Activated CD4-positive, alpha-beta T cell treated with anti-CD3 and anti-CD28 coated beads for 36 hours (primary cell): ENCODE measurements at regions of chr15 and their contacts with region 1.

Region 1: DNA sequence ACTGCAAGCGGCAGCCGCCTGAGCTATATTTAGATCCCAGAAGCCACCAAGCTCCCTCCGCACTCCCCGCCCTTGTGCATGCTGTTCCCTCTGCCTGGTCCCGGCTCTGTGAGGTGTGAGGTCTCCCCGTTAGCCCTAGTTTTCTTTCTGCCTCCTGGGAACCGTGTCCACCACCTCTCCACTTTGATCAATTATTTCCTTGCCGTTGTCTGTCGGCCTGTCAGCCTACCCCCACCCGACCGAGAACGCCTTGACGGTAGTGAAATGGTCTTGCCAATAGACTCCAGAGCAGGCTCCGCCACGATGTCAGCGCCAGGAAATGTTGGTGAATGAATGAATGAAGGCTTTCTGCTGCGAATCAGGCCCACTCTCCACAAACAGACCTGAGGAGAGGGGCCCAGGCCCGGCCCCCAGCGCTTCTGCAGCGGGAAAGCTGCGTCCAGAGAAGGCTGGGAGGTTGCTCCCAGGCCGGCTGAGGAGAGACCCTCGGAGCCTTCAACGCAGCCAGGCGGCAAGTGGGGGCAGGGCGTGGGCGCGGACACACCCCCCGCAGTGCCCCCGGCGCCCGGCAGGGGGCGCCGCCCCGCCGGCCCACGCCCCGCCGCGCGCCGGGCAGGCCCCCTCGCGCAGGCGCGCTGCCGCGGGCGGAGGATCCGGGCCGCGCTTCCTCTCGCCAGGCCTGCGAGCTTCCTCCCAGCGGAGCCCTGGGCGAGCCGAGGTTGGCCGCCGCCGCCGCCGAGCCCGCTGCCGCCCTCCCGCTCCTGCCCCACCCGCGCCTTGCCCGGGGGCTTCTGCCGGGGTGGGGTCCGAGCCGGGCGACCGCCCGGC is at the start of gene CSK:
- DNase-seq: peak; percentile 84
- ATAC-seq: peak; percentile 27
- H3K4me3 Mint-ChIP-seq: peak within 1 kb of the TSS; percentile 89
- H3K27ac Mint-ChIP-seq: peak within 1 kb of the TSS; percentile 100
- H3K4me1 Mint-ChIP-seq: peaks cover 56% of the 10 kb centered on the region
- H3K27me3 Mint-ChIP-seq: no peaks in the 10 kb centered on the region
- total RNA-seq, gene CSK: 229 to 272 TPM

Region 2: DNA sequence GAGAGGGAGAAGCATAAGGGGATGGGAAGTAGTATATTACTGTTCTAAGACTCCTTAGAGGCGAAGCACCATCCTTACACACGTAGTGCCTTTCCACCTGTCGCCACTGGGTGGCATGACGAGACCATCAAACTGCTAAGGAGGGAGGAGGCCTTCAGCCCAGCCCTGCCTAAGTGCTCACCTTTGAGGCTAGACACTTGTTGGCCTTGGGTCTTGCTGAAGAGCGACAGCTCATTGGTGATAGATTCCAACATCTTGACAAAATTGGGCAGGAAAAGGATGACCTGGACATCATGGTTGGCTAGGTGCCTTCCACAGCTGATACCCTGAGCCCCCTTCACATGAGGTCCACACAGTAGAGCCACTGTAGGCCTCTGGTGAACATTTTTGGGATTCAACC is 146.4 kb before region 1 on chr15:
- CTCF ChIA-PET with region 1: interaction called, 458 read pairs
- POLR2A ChIA-PET with region 1: no interaction called
- intact Hi-C with region 1: no loop called
- DNase-seq: peak; percentile 87
- ATAC-seq: peak; percentile 90
- H3K4me3 Mint-ChIP-seq: no peak overlapping the region
- H3K27ac Mint-ChIP-seq: no peak overlapping the region
- H3K4me1 Mint-ChIP-seq: no peaks in the 10 kb centered on the region
- H3K27me3 Mint-ChIP-seq: no peaks in the 10 kb centered on the region

Region 3: GRCh38 chr15:74793135-74794028 is 11.7 kb after region 1 on chr15:
- CTCF ChIA-PET with region 1: interaction called, 743 read pairs
- POLR2A ChIA-PET with region 1: interaction called, 26 read pairs
- intact Hi-C with region 1: loop called in 1 of 2 experiments (anchors 1 kb)
- DNase-seq: peak; percentile 86
- ATAC-seq: peak; percentile 24
- H3K4me3 Mint-ChIP-seq: no peak overlapping the region
- H3K27ac Mint-ChIP-seq: peak overlapping the region; percentile 88
- H3K4me1 Mint-ChIP-seq: peaks cover 86% of the 10 kb centered on the region
- H3K27me3 Mint-ChIP-seq: no peaks in the 10 kb centered on the region

Region 4: DNA sequence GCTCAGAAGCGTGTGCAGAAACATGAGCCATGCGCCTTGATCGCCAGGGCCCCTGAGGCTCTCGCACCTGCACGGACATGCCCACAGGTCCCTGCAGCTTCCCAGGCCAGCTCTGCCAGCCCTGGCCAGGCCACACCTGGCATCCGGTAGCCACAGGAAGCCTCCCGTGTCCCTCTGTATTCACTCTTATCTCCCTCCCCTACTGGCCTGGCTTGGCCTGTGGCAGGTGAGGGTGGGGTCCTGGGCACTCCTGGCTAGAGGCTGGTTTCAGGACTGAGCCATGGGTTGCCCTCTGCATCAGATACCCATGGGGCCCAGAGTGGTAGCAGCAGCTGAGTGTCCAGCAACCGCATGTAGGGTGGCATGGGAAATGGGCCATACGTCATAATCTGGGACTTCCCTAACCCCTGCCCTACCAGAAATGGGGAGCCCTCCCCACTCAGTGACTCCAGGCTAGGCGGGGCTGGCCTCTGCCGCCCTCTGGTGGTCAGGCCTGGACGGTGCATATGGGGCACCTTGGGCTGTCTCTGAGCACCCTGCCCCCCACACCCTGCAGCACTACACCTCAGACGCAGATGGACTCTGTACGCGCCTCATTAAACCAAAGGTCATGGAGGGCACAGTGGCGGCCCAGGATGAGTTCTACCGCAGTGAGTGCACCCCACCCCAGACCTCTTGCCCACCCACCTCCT is 18.4 kb after region 1 on chr15:
- CTCF ChIA-PET with region 1: interaction called, 743 read pairs
- POLR2A ChIA-PET with region 1: interaction called, 26 read pairs
- intact Hi-C with region 1: loop called (anchors 2 kb)
- DNase-seq: peak; percentile 93
- ATAC-seq: peak; percentile 87
- H3K4me3 Mint-ChIP-seq: no peak overlapping the region
- H3K27ac Mint-ChIP-seq: peak overlapping the region; percentile 80
- H3K4me1 Mint-ChIP-seq: peaks cover 44% of the 10 kb centered on the region
- H3K27me3 Mint-ChIP-seq: no peaks in the 10 kb centered on the region

Region 5: DNA sequence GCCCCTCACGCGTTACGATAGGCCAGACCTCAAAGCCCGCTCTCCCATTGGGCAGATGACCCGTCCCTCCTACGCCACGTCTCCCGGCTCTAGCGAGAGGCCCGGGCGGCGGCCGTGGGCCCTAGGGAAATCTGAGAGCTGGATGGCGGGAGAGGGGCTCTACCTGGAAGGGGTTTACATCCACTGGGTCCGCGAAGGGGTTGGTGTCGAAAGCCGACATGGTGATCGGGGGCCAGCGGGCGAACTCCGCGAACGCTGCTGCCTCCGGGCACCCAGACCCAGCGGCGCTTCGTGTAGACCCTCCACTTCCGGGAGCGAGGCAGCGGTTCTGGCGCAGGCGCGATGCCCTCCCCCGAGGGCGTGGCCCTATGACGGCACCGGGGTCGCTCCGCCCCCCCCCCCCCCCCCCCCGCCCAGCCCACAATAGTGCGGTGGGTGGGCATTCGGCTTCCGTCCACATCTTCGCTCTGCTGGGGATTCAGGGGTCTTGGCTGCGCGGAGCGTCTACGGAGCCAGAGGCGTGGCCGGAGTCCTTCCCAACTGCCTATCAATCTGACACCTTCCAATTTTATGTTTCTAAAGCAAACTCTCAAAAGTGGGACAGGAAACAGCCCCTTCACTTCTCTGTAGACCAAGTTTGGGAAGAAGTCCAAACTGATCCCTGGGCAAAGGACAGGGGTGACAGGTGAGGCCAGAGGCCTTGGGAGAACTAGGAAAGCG is 91.6 kb after region 1 on chr15 and contains the start of gene SCAMP2:
- CTCF ChIA-PET with region 1: no interaction called
- POLR2A ChIA-PET with region 1: interaction called, 3 read pairs
- intact Hi-C with region 1: loop called (anchors 2 to 5 kb)
- DNase-seq: peak; percentile 94
- ATAC-seq: peak; percentile 84
- H3K4me3 Mint-ChIP-seq: peak within 1 kb of the TSS; percentile 87
- H3K27ac Mint-ChIP-seq: peak within 1 kb of the TSS; percentile 87
- H3K4me1 Mint-ChIP-seq: peaks cover 48% of the 10 kb centered on the region
- H3K27me3 Mint-ChIP-seq: no peaks in the 10 kb centered on the region
- total RNA-seq, gene SCAMP2: 61.6 to 83.4 TPM

Region 6: GRCh38 chr15:74889883-74890664 is 108.4 kb after region 1 on chr15 and contains the start of gene MPI:
- CTCF ChIA-PET with region 1: interaction called, 3 read pairs
- POLR2A ChIA-PET with region 1: no interaction called
- intact Hi-C with region 1: loop called (anchors 1 to 5 kb)
- DNase-seq: peak; percentile 95
- ATAC-seq: peak; percentile 98
- H3K4me3 Mint-ChIP-seq: peak within 1 kb of the TSS; percentile 73
- H3K27ac Mint-ChIP-seq: peak within 1 kb of the TSS; percentile 86
- H3K4me1 Mint-ChIP-seq: peaks cover 46% of the 10 kb centered on the region
- H3K27me3 Mint-ChIP-seq: no peaks in the 10 kb centered on the region
- total RNA-seq, gene MPI: 75.7 to 93.3 TPM

Region 7: GRCh38 chr15:74956648-74957300 is 175.1 kb after region 1 on chr15 and contains the start of gene RPP25:
- CTCF ChIA-PET with region 1: no interaction called
- POLR2A ChIA-PET with region 1: no interaction called
- intact Hi-C with region 1: loop called in 1 of 2 experiments (anchors 5 kb)
- DNase-seq: peak; percentile 85
- ATAC-seq: peak; percentile 84
- H3K4me3 Mint-ChIP-seq: peak within 1 kb of the TSS; percentile 65
- H3K27ac Mint-ChIP-seq: no peak within 1 kb of the TSS
- H3K4me1 Mint-ChIP-seq: peaks cover 46% of the 10 kb centered on the region
- H3K27me3 Mint-ChIP-seq: peaks cover 25% of the 10 kb centered on the region
- total RNA-seq, gene RPP25: 5.4 to 6.2 TPM

Region 8: DNA sequence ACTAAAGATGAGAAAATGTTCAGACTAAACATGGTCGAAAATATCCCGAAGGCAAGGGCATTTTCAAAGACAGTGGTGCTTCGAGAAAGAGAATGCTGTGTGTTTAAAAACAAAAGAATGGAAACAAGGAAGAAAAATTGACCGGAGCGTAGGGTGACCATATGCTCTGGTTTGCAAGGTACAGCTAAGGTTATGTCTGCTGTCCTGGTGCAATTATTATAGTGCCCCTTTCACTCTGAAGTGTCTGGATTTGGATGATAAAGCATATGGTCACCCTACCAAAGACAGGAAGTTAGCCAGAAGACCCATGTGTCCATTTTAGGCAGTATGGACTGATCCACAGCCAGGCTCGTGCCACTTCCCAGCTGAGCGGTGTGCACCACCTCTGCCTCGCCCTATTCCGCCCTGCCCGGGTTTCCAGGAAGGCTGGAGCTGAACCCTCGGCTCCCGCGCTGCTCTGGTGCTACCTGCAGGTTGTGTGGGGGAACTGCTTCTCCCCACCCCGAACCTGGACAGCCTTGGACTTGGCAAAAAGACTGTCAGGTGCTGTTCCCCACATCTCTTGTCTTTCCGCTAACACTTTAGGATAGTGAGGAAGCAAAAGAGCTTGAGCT is 526.2 kb after region 1 on chr15:
- CTCF ChIA-PET with region 1: no interaction called
- POLR2A ChIA-PET with region 1: no interaction called
- intact Hi-C with region 1: no loop called
- DNase-seq: peak; percentile 50
- ATAC-seq: peak; percentile 33
- H3K4me3 Mint-ChIP-seq: no peak overlapping the region
- H3K27ac Mint-ChIP-seq: no peak overlapping the region
- H3K4me1 Mint-ChIP-seq: peaks cover 3% of the 10 kb centered on the region
- H3K27me3 Mint-ChIP-seq: peaks cover 23% of the 10 kb centered on the region